ENCODE measurements at regions of chrX and their contacts with region 1.

Region 1: GRCh38 chrX:9995855-9996339 is 28.7 kb downstream of the CLDN34 start:
- DNase-seq: peak; percentile 74 to 82
- H3K4me3 ChIP-seq: no peak overlapping the region
- H3K4me3 Mint-ChIP-seq: no peak overlapping the region
- H3K27ac Mint-ChIP-seq: no peak overlapping the region
- H3K4me1 ChIP-seq: peaks cover 7% of the 10 kb centered on the region; the same call in 1 of the 2 replicates
- H3K4me1 Mint-ChIP-seq: peaks cover 7% of the 10 kb centered on the region
- H3K27me3 ChIP-seq: no peaks in the 10 kb centered on the region
- H3K27me3 Mint-ChIP-seq: no peaks in the 10 kb centered on the region
- CTCF ChIP-seq: peak; percentile 85 to 87

Region 2: GRCh38 chrX:10007621-10008020 is 11.7 kb after region 1 on chrX:
- CTCF ChIA-PET with region 1: no interaction called
- POLR2A ChIA-PET with region 1: no interaction called
- intact Hi-C with region 1: loop called (anchors 1 kb)
- DNase-seq: no peak
- H3K4me3 ChIP-seq: no peak overlapping the region
- H3K4me3 Mint-ChIP-seq: no peak overlapping the region
- H3K27ac Mint-ChIP-seq: no peak overlapping the region
- H3K4me1 ChIP-seq: peaks cover 40% of the 10 kb centered on the region
- H3K4me1 Mint-ChIP-seq: peaks cover 34% of the 10 kb centered on the region
- H3K27me3 ChIP-seq: no peaks in the 10 kb centered on the region
- H3K27me3 Mint-ChIP-seq: no peaks in the 10 kb centered on the region
- CTCF ChIP-seq: no peak

Region 3: GRCh38 chrX:10014462-10015356 is 18.8 kb after region 1 on chrX:
- CTCF ChIA-PET with region 1: no interaction called
- POLR2A ChIA-PET with region 1: no interaction called
- intact Hi-C with region 1: loop called (anchors 2 kb)
- DNase-seq: peak; percentile 91 to 92
- H3K4me3 ChIP-seq: peak overlapping the region; percentile 58
- H3K4me3 Mint-ChIP-seq: peak overlapping the region; percentile 73
- H3K27ac Mint-ChIP-seq: peak overlapping the region; percentile 65
- H3K4me1 ChIP-seq: peaks cover 10% of the 10 kb centered on the region; the same call in 1 of the 2 replicates
- H3K4me1 Mint-ChIP-seq: peaks cover 30% of the 10 kb centered on the region
- H3K27me3 ChIP-seq: no peaks in the 10 kb centered on the region
- H3K27me3 Mint-ChIP-seq: no peaks in the 10 kb centered on the region
- CTCF ChIP-seq: no peak

Region 4: GRCh38 chrX:10062352-10062751 is 66.5 kb after region 1 on chrX:
- CTCF ChIA-PET with region 1: no interaction called
- POLR2A ChIA-PET with region 1: no interaction called
- intact Hi-C with region 1: loop called (anchors 5 kb)
- DNase-seq: peak in 1 of 2 experiments; percentile 4
- H3K4me3 ChIP-seq: no peak overlapping the region
- H3K4me3 Mint-ChIP-seq: no peak overlapping the region
- H3K27ac Mint-ChIP-seq: no peak overlapping the region
- H3K4me1 ChIP-seq: peaks cover 10% of the 10 kb centered on the region; the same call in 1 of the 2 replicates
- H3K4me1 Mint-ChIP-seq: peaks cover 9% of the 10 kb centered on the region
- H3K27me3 ChIP-seq: no peaks in the 10 kb centered on the region
- H3K27me3 Mint-ChIP-seq: no peaks in the 10 kb centered on the region
- CTCF ChIP-seq: no peak